Naive thymus-derived CD4-positive, alpha-beta T cell (primary cell): ENCODE measurements at regions of chr11 and their contacts with region 1.

Region 1: GRCh38 chr11:78645226-78646202 is 70.8 kb upstream of the NARS2 start:
- DNase-seq: peak in 7 of 9 donors; percentile 24 to 65 (median 26)
- ATAC-seq: peak; percentile 80
- H3K4me3 ChIP-seq: no peak overlapping the region
- H3K4me3 Mint-ChIP-seq: peak overlapping the region in 7 of 10 donors; percentile 27 to 86 (median 65)
- H3K27ac ChIP-seq: no peak overlapping the region
- H3K27ac Mint-ChIP-seq: no peak overlapping the region
- H3K4me1 ChIP-seq: no peaks in the 10 kb centered on the region
- H3K4me1 Mint-ChIP-seq: peaks cover 0 to 23% (median 9%) of the 10 kb centered on the region in 7 donors
- H3K27me3 ChIP-seq: no peaks in the 10 kb centered on the region
- H3K27me3 Mint-ChIP-seq: peaks cover 0 to 4% (median 0%) of the 10 kb centered on the region in 5 donors

Region 2: DNA sequence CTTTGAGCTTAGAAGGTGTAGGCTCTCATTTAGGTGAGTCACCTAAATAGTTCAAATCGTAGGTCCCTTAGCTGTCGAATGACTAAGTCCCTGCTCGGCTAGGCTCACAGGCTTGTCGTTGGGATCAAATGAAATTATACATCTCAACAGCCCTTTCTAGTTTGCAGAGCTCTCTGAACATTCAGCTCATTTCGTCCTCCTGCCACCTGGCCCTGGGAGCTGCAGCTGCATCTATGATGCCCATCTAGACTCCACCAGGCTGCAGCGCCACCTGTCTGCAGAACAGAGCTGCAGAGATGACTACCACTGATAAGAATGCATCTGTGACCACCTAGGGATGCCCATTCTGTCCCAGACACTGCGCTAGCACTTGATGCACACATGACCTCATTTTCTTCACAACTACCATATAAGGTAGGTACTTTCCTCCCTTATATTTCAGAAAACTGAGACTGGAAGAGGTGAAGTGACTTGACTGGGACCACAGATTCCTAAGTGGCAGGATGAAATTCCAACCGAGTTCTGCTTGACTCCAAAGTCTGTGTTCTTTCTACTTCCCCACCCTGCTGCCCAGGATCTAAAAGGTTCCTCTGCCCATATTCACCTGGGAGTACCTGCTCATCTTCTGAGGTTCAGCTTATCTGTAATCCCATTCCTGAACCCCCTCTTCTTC is 70.3 kb after region 1 on chr11:
- CTCF ChIA-PET with region 1: no interaction called
- POLR2A ChIA-PET with region 1: no interaction called
- intact Hi-C with region 1: loop called (anchors 1 to 5 kb)
- DNase-seq: peak in 2 of 9 donors; percentile 7 to 47
- ATAC-seq: no peak
- H3K4me3 ChIP-seq: no peak overlapping the region
- H3K4me3 Mint-ChIP-seq: no peak overlapping the region
- H3K27ac ChIP-seq: no peak overlapping the region
- H3K27ac Mint-ChIP-seq: no peak overlapping the region
- H3K4me1 ChIP-seq: no peaks in the 10 kb centered on the region
- H3K4me1 Mint-ChIP-seq: no peaks in the 10 kb centered on the region
- H3K27me3 ChIP-seq: peaks cover 0 to 3% of the 10 kb centered on the region in 2 donors
- H3K27me3 Mint-ChIP-seq: peaks cover 0 to 8% (median 0%) of the 10 kb centered on the region in 5 donors

Region 3: DNA sequence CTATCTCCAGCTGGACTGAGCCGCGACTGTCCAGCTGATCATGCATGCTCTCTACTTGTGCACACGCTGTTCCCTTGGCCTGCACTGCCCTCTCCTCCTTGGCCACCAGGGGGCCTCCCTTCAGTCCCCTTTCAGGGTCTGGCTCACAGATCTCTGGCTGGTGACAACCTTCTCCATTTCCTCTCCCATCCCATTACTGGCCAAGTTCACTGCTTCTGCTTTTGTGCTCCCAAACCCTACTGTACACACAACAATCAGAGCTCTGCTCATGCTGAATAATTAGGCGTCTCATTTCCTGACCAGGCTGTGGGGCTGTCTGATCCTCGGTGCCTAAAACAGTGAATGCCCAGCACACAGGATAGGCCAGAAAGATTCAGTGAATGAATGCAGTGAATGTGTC is 153.1 kb after region 1 on chr11:
- CTCF ChIA-PET with region 1: no interaction called
- POLR2A ChIA-PET with region 1: no interaction called
- intact Hi-C with region 1: loop called in 1 of 2 experiments (anchors 10 kb)
- DNase-seq: peak in 2 of 9 donors; percentile 13 to 34
- ATAC-seq: peak; percentile 81
- H3K4me3 ChIP-seq: no peak overlapping the region
- H3K4me3 Mint-ChIP-seq: no peak overlapping the region
- H3K27ac ChIP-seq: no peak overlapping the region
- H3K27ac Mint-ChIP-seq: no peak overlapping the region
- H3K4me1 ChIP-seq: no peaks in the 10 kb centered on the region
- H3K4me1 Mint-ChIP-seq: no peaks in the 10 kb centered on the region
- H3K27me3 ChIP-seq: no peaks in the 10 kb centered on the region
- H3K27me3 Mint-ChIP-seq: peaks cover 0 to 15% (median 9%) of the 10 kb centered on the region in 5 donors

Region 4: GRCh38 chr11:78916759-78917158 is 271.2 kb after region 1 on chr11:
- CTCF ChIA-PET with region 1: no interaction called
- POLR2A ChIA-PET with region 1: no interaction called
- intact Hi-C with region 1: loop called in 1 of 2 experiments (anchors 10 kb)
- DNase-seq: no peak
- ATAC-seq: no peak
- H3K4me3 ChIP-seq: no peak overlapping the region
- H3K4me3 Mint-ChIP-seq: no peak overlapping the region
- H3K27ac ChIP-seq: no peak overlapping the region
- H3K27ac Mint-ChIP-seq: no peak overlapping the region
- H3K4me1 ChIP-seq: no peaks in the 10 kb centered on the region
- H3K4me1 Mint-ChIP-seq: no peaks in the 10 kb centered on the region
- H3K27me3 ChIP-seq: no peaks in the 10 kb centered on the region
- H3K27me3 Mint-ChIP-seq: peaks cover 0 to 17% (median 2%) of the 10 kb centered on the region in 5 donors

Region 5: GRCh38 chr11:79100093-79100910 is 454.8 kb after region 1 on chr11:
- CTCF ChIA-PET with region 1: no interaction called
- POLR2A ChIA-PET with region 1: no interaction called
- intact Hi-C with region 1: loop called in 1 of 2 experiments (anchors 1 kb)
- DNase-seq: peak in 1 of 9 donors; percentile 34
- ATAC-seq: peak; percentile 58
- H3K4me3 ChIP-seq: no peak overlapping the region
- H3K4me3 Mint-ChIP-seq: no peak overlapping the region
- H3K27ac ChIP-seq: no peak overlapping the region
- H3K27ac Mint-ChIP-seq: no peak overlapping the region
- H3K4me1 ChIP-seq: no peaks in the 10 kb centered on the region
- H3K4me1 Mint-ChIP-seq: peaks cover 0 to 4% (median 0%) of the 10 kb centered on the region in 7 donors
- H3K27me3 ChIP-seq: no peaks in the 10 kb centered on the region
- H3K27me3 Mint-ChIP-seq: peaks cover 4 to 30% (median 9%) of the 10 kb centered on the region in 5 donors

Region 6: GRCh38 chr11:79493555-79494171 is 848.1 kb after region 1 on chr11:
- CTCF ChIA-PET with region 1: interaction called, 4 read pairs
- POLR2A ChIA-PET with region 1: no interaction called
- intact Hi-C with region 1: loop called in 1 of 2 experiments (anchors 2 kb)
- DNase-seq: peak in 4 of 9 donors; percentile 3 to 45 (median 13)
- ATAC-seq: no peak
- H3K4me3 ChIP-seq: no peak overlapping the region
- H3K4me3 Mint-ChIP-seq: no peak overlapping the region
- H3K27ac ChIP-seq: no peak overlapping the region
- H3K27ac Mint-ChIP-seq: no peak overlapping the region
- H3K4me1 ChIP-seq: no peaks in the 10 kb centered on the region
- H3K4me1 Mint-ChIP-seq: peaks cover 0 to 2% (median 0%) of the 10 kb centered on the region in 7 donors
- H3K27me3 ChIP-seq: no peaks in the 10 kb centered on the region
- H3K27me3 Mint-ChIP-seq: peaks cover 0 to 27% (median 17%) of the 10 kb centered on the region in 5 donors